ENCODE measurements at regions of chr10 and their contacts with region 1.

Region 1: DNA sequence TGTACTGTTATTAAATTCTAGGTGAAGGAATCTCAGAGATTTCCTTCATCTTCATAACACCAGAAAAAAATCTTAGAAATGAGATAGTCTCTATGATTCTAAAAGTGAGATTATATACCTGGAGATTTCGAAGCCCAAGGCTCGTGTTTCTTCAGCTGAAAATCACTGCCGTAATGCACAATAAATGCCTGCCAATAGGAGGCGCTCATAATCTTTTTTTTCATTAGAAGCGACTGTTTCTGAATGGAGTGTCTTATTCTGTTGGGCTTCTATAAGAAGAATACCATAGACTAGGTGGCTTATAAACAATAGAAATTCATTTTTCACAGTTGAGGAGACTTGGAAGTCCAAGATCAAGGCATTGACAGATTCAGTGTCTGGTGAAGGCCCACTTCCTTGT is 294.7 kb downstream of the PRKG1 start:
- DNase-seq: no peak
- H3K4me3 ChIP-seq: no peak overlapping the region
- H3K27ac ChIP-seq: no peak overlapping the region
- H3K4me1 ChIP-seq: no peaks in the 10 kb centered on the region
- H3K27me3 ChIP-seq: no peaks in the 10 kb centered on the region
- CTCF ChIP-seq: no peak; the same call in 1 of the 2 replicates

Region 2: DNA sequence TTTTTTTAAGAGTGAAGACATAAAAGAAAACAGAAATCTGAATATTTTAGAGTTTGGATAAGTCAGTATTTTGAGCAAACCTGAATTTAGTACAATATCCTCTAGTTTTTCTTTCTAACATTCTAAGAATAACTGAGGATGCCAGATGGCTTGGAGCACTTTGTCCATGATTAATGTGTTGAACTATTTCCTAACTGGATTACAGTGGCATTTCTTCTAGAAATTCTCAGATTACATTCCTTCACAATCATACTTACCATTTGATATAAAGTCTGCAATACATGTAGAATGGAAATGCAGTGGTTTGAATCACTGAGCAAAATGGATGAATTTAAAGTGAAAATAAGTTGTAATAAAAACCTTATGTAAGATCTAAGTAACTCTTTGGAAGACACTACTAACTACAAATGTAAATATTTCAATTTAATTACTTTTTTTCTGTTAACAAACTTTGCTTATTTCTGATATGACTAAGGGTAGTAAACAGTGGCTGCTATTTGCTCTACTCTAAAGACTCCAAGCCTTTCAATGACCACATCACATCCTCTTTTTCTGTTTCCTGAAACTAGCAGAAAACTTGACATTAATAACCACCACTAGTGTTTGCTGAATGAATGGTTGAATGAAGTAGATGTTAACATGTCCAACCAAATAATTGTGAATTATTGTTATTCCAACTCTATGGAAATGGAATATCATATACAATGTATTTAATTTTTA is 191.8 kb before region 1 on chr10:
- CTCF ChIA-PET with region 1: no interaction called
- POLR2A ChIA-PET with region 1: interaction called, 30 read pairs
- intact Hi-C with region 1: no loop called
- DNase-seq: no peak
- H3K4me3 ChIP-seq: no peak overlapping the region
- H3K27ac ChIP-seq: no peak overlapping the region
- H3K4me1 ChIP-seq: no peaks in the 10 kb centered on the region
- H3K27me3 ChIP-seq: no peaks in the 10 kb centered on the region
- CTCF ChIP-seq: no peak

Region 3: GRCh38 chr10:51602326-51602725 is 233.4 kb after region 1 on chr10:
- CTCF ChIA-PET with region 1: no interaction called
- POLR2A ChIA-PET with region 1: no interaction called
- intact Hi-C with region 1: no loop called
- DNase-seq: no peak
- H3K4me3 ChIP-seq: no peak overlapping the region
- H3K27ac ChIP-seq: no peak overlapping the region
- H3K4me1 ChIP-seq: no peaks in the 10 kb centered on the region
- H3K27me3 ChIP-seq: no peaks in the 10 kb centered on the region
- CTCF ChIP-seq: no peak

Measured in PC-9 (cell line).